CD8-positive, alpha-beta T cell (primary cell): ENCODE measurements at regions of chr10 and their contacts with region 1.

Region 1: DNA sequence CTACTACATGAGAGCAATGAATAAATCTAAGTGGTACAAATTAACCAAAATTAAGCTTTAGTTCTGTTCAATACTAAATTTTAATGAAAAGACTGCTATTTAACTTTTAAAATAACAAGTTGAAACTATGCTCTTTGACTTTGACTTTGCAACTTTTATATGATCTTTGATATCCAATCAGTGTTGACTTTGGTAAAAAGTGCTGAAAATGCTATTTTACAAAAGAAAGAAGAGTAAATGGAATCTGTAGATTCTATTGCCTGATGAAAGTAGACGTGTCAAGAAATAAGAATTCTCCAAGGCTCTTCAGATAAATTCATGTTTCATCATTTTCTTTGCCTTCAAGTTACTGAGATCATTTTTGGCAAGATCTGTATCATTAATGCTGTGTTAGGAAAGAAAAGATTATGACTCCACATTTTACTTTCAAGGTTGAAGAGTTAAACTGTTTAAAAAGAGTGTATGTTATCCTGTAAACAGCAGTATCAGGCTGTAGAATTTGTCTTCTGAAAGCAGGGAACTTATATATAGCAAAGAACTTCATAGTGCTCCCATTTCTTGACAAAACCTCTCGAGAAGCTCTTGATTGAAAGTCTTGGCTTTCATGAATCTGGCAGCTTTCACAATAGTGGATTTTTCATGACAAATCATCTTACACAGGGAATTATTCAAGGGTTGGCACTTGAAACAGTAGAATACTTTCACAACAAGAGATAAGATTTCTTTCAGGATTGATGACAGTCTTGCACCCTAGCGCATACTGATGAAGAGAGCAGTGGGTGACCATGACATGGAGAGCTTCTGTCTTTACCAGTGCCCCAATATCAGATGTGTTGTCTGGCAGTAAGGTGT is 72.1 kb downstream of the PTEN start:
- DNase-seq: no peak
- ATAC-seq: no peak
- H3K4me3 ChIP-seq: no peak overlapping the region
- H3K4me3 Mint-ChIP-seq: no peak overlapping the region
- H3K27ac ChIP-seq: no peak overlapping the region
- H3K27ac Mint-ChIP-seq: peak overlapping the region; percentile 9
- H3K4me1 ChIP-seq: peaks cover 6% of the 10 kb centered on the region
- H3K4me1 Mint-ChIP-seq: peaks cover 54% of the 10 kb centered on the region
- H3K27me3 ChIP-seq: no peaks in the 10 kb centered on the region
- H3K27me3 Mint-ChIP-seq: no peaks in the 10 kb centered on the region
- CTCF ChIP-seq: no peak

Region 2: GRCh38 chr10:87952612-87953011 is 17.1 kb after region 1 on chr10:
- CTCF ChIA-PET with region 1: no interaction called
- POLR2A ChIA-PET with region 1: no interaction called
- intact Hi-C with region 1: loop called in 1 of 2 experiments (anchors 2 kb)
- DNase-seq: no peak
- ATAC-seq: no peak
- H3K4me3 ChIP-seq: no peak overlapping the region
- H3K4me3 Mint-ChIP-seq: no peak overlapping the region
- H3K27ac ChIP-seq: no peak overlapping the region
- H3K27ac Mint-ChIP-seq: peak overlapping the region; percentile 13
- H3K4me1 ChIP-seq: no peaks in the 10 kb centered on the region
- H3K4me1 Mint-ChIP-seq: peaks cover 28% of the 10 kb centered on the region
- H3K27me3 ChIP-seq: no peaks in the 10 kb centered on the region
- H3K27me3 Mint-ChIP-seq: no peaks in the 10 kb centered on the region
- CTCF ChIP-seq: no peak